ENCODE measurements at regions of chr2 and their contacts with region 1.

Region 1: DNA sequence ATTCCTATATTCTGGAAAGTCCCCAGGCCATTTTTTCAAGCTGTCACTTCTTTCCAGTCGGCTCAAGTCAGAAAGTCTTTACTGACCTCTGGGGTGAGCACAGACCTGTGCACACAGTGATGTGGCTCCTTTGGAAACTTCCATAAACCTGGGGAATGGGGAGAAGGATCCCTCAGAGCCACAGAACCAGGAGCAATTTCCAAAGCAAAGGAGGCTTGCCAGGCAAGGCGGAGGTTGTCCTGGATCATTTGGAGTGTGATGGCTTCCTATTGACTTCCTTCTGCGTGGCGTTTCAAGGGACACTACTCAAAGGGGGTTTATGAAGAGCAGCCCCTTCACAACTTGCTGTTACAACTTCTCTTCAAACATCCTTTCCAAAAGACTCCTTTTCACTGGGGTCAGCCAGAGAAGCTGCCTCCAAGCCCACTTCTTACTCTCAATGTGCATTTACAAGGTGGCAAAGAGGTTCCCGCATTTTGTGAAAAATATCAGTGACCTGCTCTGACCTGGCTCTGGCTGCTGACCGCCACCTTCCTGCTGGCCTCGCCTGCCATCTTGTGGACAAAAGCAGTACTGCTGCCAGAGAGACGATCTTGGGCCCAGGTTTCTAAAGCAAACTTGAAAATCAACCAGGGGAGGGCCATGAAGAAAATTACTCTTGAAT is 18.2 kb upstream of the TMEM247 start:
- DNase-seq: peak; percentile 85
- ATAC-seq: peak; percentile 65

Region 2: GRCh38 chr2:45681675-45682074 is 779.5 kb before region 1 on chr2:
- intact Hi-C with region 1: no loop called
- DNase-seq: no peak
- ATAC-seq: peak; percentile 69

Region 3: GRCh38 chr2:45994060-45994459 is 467.1 kb before region 1 on chr2:
- intact Hi-C with region 1: loop called (anchors 1 kb)
- DNase-seq: no peak
- ATAC-seq: no peak

Region 4: DNA sequence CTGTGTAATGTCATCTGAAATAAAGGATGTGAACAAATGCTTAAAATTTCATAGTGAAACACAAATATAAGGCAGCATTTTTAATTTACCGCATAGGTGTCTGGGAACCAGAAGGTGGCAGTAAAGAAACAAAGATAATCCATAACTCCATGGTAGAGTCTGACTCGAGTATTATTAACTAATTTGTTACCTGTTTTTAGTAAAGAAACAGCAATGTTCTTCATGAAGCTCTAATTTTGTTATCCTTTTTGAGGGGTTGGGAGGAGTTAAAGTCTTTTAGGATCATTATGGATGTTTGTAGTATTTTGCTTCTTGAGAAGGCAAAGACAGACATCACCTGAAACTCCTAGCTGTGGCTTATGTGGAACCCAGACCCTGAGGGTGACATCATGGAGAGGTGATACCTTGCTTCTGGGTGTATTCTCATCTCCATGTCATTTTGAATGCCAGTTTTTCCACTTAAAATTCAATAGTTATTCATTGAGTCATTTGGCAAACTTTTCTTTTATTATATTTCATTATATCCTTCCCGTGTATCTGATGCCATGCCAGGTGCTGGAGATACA is 450.1 kb before region 1 on chr2:
- intact Hi-C with region 1: loop called (anchors 1 kb)
- DNase-seq: no peak
- ATAC-seq: no peak

Region 5: GRCh38 chr2:46230115-46230571 is 231.0 kb before region 1 on chr2:
- intact Hi-C with region 1: loop called (anchors 2 kb)
- DNase-seq: peak; percentile 61
- ATAC-seq: peak; percentile 83